Breast epithelium (tissue), 4 donors: ENCODE measurements at regions of chr9 and their contacts with region 1.

Region 1: DNA sequence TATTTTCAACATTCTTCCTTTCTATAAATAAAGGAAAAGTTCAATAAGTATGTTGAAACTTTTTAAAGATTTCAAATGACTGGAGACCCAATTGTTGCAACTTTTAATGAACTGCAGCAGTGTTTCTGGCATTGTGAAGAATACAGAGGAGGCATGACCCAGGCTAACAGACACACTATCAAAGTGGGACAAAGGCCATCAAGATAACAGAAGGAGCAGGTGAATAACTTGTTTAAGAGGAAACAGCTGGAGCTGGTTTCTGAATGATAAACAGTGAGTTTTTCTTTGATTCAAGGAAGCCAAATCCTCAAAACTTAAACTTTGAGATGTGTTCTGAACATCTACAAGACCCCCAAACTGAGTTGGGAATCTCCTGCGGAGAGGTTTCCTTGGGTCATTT is 734.6 kb downstream of the TLR4 start:
- DNase-seq: no peak
- H3K4me3 ChIP-seq: no peak overlapping the region
- H3K27ac ChIP-seq: no peak overlapping the region
- H3K4me1 ChIP-seq: no peaks in the 10 kb centered on the region
- H3K27me3 ChIP-seq: no peaks in the 10 kb centered on the region
- CTCF ChIP-seq: no peak
- POLR2A ChIP-seq: no peak

Region 2: GRCh38 chr9:118384531-118385100 is 54.2 kb before region 1 on chr9:
- intact Hi-C with region 1: no loop called
- DNase-seq: no peak
- H3K4me3 ChIP-seq: no peak overlapping the region
- H3K27ac ChIP-seq: no peak overlapping the region
- H3K4me1 ChIP-seq: no peaks in the 10 kb centered on the region
- H3K27me3 ChIP-seq: no peaks in the 10 kb centered on the region
- CTCF ChIP-seq: no peak
- POLR2A ChIP-seq: no peak

Region 3: DNA sequence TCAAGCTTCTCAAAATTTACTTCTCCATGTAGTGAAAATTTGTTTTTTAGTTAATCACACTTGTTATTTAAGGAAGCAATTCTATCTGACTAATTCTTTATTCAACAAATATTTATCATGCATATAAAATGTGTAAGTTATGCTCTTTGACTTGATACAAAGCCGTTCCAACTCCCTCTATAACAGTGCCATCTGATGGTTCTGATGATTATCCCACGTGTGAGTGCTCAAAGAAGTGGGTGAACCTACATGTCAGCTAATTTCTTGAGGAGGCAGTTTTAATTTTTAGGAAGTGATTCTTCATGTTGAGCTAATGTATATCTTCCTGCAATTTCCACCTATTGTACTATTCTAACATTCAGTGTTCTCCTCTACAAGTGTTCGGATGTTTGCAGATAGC is 1019.3 kb after region 1 on chr9:
- intact Hi-C with region 1: loop called (anchors 5 kb)
- DNase-seq: no peak
- H3K4me3 ChIP-seq: no peak overlapping the region
- H3K27ac ChIP-seq: no peak overlapping the region
- H3K4me1 ChIP-seq: no peaks in the 10 kb centered on the region
- H3K27me3 ChIP-seq: no peaks in the 10 kb centered on the region
- CTCF ChIP-seq: no peak
- POLR2A ChIP-seq: no peak